ENCODE measurements at regions of chr7 and their contacts with region 1.

Region 1: GRCh38 chr7:141014524-141015395 is at the start of gene MRPS33:
- DNase-seq: peak; percentile 95 to 97 (median 96)
- H3K4me3 ChIP-seq: peak within 1 kb of the TSS; percentile 61 to 85
- H3K4me3 Mint-ChIP-seq: peak within 1 kb of the TSS; percentile 95 to 100 (median 98)
- H3K27ac ChIP-seq: peak within 1 kb of the TSS; percentile 96
- H3K27ac Mint-ChIP-seq: peak within 1 kb of the TSS; percentile 99 to 100 (median 100)
- H3K4me1 ChIP-seq: peaks cover 24% of the 10 kb centered on the region
- H3K4me1 Mint-ChIP-seq: peaks cover 19 to 42% (median 34%) of the 10 kb centered on the region in 4 donors
- H3K27me3 ChIP-seq: no peaks in the 10 kb centered on the region
- H3K27me3 Mint-ChIP-seq: peaks cover 5 to 7% of the 10 kb centered on the region in 2 donors
- total RNA-seq, gene MRPS33: 46.7 to 48.0 TPM

Region 2: GRCh38 chr7:139777948-139778841 is 1236.6 kb before region 1 on chr7 and contains the start of gene HIPK2:
- CTCF ChIA-PET with region 1: no interaction called
- POLR2A ChIA-PET with region 1: no interaction called
- intact Hi-C with region 1: loop called (anchors 10 kb)
- DNase-seq: peak; percentile 69 to 80 (median 74)
- H3K4me3 ChIP-seq: peak within 1 kb of the TSS; percentile 73 to 92
- H3K4me3 Mint-ChIP-seq: peak within 1 kb of the TSS; percentile 96 to 100 (median 99)
- H3K27ac ChIP-seq: peak within 1 kb of the TSS; percentile 64
- H3K27ac Mint-ChIP-seq: peak within 1 kb of the TSS; percentile 97 to 99 (median 98)
- H3K4me1 ChIP-seq: peaks cover 40% of the 10 kb centered on the region
- H3K4me1 Mint-ChIP-seq: peaks cover 30 to 57% (median 40%) of the 10 kb centered on the region in 4 donors
- H3K27me3 ChIP-seq: no peaks in the 10 kb centered on the region
- H3K27me3 Mint-ChIP-seq: peaks cover 2 to 7% of the 10 kb centered on the region in 2 donors
- total RNA-seq, gene HIPK2: 31.2 to 34.1 TPM

Region 3: GRCh38 chr7:140517546-140518369 is 497.0 kb before region 1 on chr7:
- CTCF ChIA-PET with region 1: interaction called, 5 read pairs
- POLR2A ChIA-PET with region 1: no interaction called
- intact Hi-C with region 1: loop called (anchors 1 kb)
- DNase-seq: peak; percentile 49 to 60 (median 54)
- H3K4me3 ChIP-seq: no peak overlapping the region
- H3K4me3 Mint-ChIP-seq: peak overlapping the region in 1 of 8 donors; percentile 65
- H3K27ac ChIP-seq: no peak overlapping the region
- H3K27ac Mint-ChIP-seq: no peak overlapping the region
- H3K4me1 ChIP-seq: peaks cover 4% of the 10 kb centered on the region
- H3K4me1 Mint-ChIP-seq: peaks cover 0 to 7% (median 3%) of the 10 kb centered on the region in 4 donors
- H3K27me3 ChIP-seq: no peaks in the 10 kb centered on the region
- H3K27me3 Mint-ChIP-seq: peaks cover 1 to 5% of the 10 kb centered on the region in 2 donors

Region 4: GRCh38 chr7:140810830-140811556 is 203.8 kb before region 1 on chr7:
- CTCF ChIA-PET with region 1: interaction called, 196 read pairs
- POLR2A ChIA-PET with region 1: interaction called, 18 read pairs
- intact Hi-C with region 1: loop called (anchors 1 kb)
- DNase-seq: peak; percentile 64 to 67 (median 65)
- H3K4me3 ChIP-seq: no peak overlapping the region
- H3K4me3 Mint-ChIP-seq: no peak overlapping the region
- H3K27ac ChIP-seq: no peak overlapping the region
- H3K27ac Mint-ChIP-seq: peak overlapping the region in 5 of 7 donors; percentile 0 to 87 (median 74)
- H3K4me1 ChIP-seq: no peaks in the 10 kb centered on the region
- H3K4me1 Mint-ChIP-seq: peaks cover 5 to 7% (median 6%) of the 10 kb centered on the region in 4 donors
- H3K27me3 ChIP-seq: no peaks in the 10 kb centered on the region
- H3K27me3 Mint-ChIP-seq: no peaks in the 10 kb centered on the region

Region 5: GRCh38 chr7:141072548-141073172 is 57.9 kb after region 1 on chr7:
- CTCF ChIA-PET with region 1: interaction called, 7 read pairs
- POLR2A ChIA-PET with region 1: interaction called, 9 read pairs
- intact Hi-C with region 1: loop called (anchors 2 kb)
- DNase-seq: peak in 2 of 5 donors; percentile 21 to 30
- H3K4me3 ChIP-seq: peak overlapping the region; percentile 30 to 59
- H3K4me3 Mint-ChIP-seq: peak overlapping the region; percentile 82 to 94 (median 86)
- H3K27ac ChIP-seq: no peak overlapping the region
- H3K27ac Mint-ChIP-seq: peak overlapping the region in 1 of 7 donors; percentile 16
- H3K4me1 ChIP-seq: peaks cover 24% of the 10 kb centered on the region
- H3K4me1 Mint-ChIP-seq: peaks cover 9 to 35% (median 20%) of the 10 kb centered on the region in 4 donors
- H3K27me3 ChIP-seq: peaks cover 17% of the 10 kb centered on the region
- H3K27me3 Mint-ChIP-seq: peaks cover 28% of the 10 kb centered on the region in 2 donors

Region 6: GRCh38 chr7:141701489-141702046 is 686.8 kb after region 1 on chr7:
- CTCF ChIA-PET with region 1: no interaction called
- POLR2A ChIA-PET with region 1: interaction called, 10 read pairs
- intact Hi-C with region 1: no loop called
- DNase-seq: peak; percentile 77 to 88 (median 79)
- H3K4me3 ChIP-seq: peak overlapping the region in 1 of 2 donors; percentile 57
- H3K4me3 Mint-ChIP-seq: peak overlapping the region; percentile 87 to 94 (median 90)
- H3K27ac ChIP-seq: peak overlapping the region; percentile 74
- H3K27ac Mint-ChIP-seq: peak overlapping the region; percentile 87 to 95 (median 93)
- H3K4me1 ChIP-seq: peaks cover 44% of the 10 kb centered on the region
- H3K4me1 Mint-ChIP-seq: peaks cover 36 to 65% (median 47%) of the 10 kb centered on the region in 4 donors
- H3K27me3 ChIP-seq: no peaks in the 10 kb centered on the region
- H3K27me3 Mint-ChIP-seq: peaks cover 0 to 2% of the 10 kb centered on the region in 2 donors

Measured in CD4-positive, alpha-beta memory T cell (primary cell).